ENCODE measurements at regions of chr12 and their contacts with region 1.

Region 1: DNA sequence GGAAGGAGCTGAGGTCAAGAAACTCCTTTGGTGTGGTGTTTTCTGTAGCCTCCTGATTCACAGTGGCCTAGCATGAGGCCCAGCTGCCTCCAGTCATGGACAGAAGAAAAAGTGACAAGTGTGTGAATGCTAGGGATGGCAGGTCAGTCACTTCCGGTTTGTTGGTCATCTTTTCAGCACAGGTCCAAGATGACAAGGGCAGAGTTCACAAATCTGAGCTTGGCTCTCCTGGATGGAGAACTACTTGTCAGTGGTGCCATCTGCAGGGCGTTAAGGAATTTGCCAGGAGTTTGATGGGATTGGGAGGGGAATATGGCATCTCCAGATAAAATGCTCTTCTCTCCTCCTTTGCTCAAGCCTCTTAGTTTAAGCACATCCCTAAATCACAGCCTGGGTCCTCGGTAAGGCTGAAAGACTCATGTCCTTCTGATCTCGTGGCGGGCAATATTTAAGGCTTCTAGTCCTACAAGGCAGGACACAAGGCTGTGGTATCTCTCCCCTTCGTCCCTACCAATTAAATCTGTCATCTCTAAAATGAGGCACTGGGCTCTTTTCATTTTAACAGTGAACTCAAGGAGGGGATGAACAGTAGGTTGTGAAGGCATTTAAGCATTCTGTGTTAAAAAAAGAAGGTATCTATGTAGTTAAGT is 10.0 kb downstream of the TUBA1B start:
- DNase-seq: peak in 7 of 10 donors; percentile 28 to 64 (median 54)

Region 2: DNA sequence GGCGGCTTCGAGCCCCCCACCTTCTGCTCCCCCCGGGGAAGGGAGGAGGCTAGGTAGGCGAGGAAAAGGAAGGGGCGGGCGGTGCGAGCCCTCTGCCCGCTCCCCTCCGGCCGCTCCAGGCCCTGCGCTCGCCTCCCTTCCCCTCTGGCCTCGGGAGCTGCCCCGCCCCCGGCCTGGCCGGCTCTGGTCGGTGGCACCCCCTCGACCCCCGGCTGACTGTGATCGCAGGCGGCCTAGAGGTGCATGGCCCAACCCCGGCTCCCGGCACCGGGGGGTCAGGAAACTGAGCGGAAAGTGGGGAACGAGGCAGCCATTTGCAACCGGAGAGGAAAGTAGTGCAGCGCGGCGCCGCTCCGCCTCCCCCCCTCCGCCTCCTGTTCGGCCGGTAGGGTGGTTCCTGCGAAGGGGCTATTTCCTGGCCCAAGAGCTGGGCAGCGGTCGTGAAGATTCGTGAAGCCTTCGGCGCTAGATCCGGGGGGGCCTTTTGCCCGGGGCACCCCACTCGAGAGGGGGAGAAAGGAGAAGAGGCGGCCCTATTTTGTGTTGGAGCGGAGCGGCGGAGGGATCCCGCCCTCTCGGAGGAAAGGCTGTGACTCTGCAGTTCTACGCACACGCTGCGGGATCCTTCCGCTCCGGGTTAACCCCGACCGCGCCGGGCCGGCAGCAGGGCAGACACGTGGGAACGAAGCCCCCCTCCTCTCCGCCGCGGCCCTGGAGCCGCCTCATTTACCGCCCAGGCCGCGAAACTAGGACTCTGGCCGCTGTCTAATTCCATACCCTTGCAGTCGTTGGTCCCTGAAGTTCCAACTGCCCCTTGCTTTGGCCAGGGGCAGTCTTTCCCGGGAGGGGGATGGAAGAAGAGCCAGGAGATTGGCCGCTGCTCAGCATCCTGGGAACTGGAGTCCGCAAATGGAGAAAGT is 60.7 kb before region 1 on chr12 and contains the start of gene KMT2D:
- intact Hi-C with region 1: loop called (anchors 5 kb)
- DNase-seq: peak; percentile 86 to 99 (median 90)

Region 3: DNA sequence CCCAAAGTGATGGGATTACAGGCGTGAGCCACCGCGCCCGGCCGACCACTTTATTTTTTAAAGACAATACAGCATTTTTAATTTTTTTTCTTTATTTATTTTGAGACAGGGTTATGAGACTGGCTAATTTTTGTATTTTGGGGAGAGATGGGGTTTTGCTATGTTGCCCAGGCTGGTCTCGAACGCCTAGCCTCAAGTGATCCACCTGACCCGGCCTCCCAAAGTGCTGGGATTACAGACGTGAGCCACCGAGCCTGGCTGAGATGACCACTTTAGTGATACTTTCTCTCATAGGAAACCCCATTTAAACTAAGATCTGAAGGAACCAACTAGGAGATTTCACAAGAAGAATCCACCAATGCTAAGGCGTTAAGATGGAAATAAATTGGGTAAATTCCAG is 50.2 kb before region 1 on chr12:
- intact Hi-C with region 1: no loop called
- DNase-seq: peak in 1 of 10 donors; percentile 50

Region 4: DNA sequence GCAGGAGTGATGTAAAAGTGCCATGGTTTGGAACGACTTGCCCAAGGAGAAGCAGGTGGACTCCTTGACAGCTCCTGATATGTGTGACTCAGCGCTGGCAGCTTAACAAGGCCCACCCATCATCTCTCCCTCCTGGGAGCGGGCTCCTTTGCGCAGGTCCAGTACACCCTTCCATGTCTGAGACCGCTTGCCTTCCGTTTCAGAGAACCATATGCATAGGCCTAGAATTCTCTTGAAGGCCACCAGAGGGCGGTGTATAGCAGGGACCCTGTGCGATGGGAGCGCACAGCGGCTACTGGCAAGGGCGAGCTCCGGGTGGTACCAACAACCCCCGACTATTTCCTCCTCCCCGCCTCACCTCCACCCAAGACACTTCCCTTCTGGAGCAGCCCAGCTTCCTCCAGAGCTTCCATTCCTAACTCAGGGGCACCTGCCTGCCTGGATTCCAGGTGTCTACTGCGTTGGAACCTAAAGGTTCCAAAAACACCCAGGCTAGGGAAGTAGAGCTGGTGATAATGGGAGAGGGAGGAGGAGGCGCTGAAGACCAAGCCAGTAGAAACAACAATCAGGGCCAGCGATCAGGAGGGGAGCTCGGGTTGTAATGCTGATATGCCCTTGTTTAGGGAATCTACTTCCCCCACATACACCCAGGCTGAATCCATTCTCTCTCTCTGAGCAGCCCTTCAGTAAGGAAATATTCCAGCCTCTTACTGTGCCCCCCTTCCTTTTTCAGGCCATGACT is 32.8 kb before region 1 on chr12:
- intact Hi-C with region 1: loop called (anchors 2 kb)
- DNase-seq: peak; percentile 60 to 96 (median 80)